HepG2 (cell line): ENCODE measurements at regions of chrX and their contacts with region 1.

Region 1: GRCh38 chrX:82412858-82413257 is 1095.2 kb upstream of the POU3F4 start:
- DNase-seq: no peak
- ATAC-seq: no peak
- H3K4me3 ChIP-seq: no peak overlapping the region
- H3K27ac ChIP-seq: no peak overlapping the region
- H3K4me1 ChIP-seq: no peaks in the 10 kb centered on the region
- H3K27me3 ChIP-seq: no peaks in the 10 kb centered on the region
- CTCF ChIP-seq: no peak
- EP300 ChIP-seq: no peak
- POLR2A ChIP-seq: no peak
- RAD21 ChIP-seq: no peak

Region 2: GRCh38 chrX:82384401-82384800 is 28.5 kb before region 1 on chrX:
- CTCF ChIA-PET with region 1: no interaction called
- POLR2A ChIA-PET with region 1: no interaction called
- in situ Hi-C with region 1: no loop called
- intact Hi-C with region 1: no loop called
- DNase-seq: no peak
- ATAC-seq: no peak
- H3K4me3 ChIP-seq: no peak overlapping the region
- H3K27ac ChIP-seq: no peak overlapping the region
- H3K4me1 ChIP-seq: no peaks in the 10 kb centered on the region
- H3K27me3 ChIP-seq: no peaks in the 10 kb centered on the region
- CTCF ChIP-seq: no peak
- EP300 ChIP-seq: no peak
- POLR2A ChIP-seq: no peak
- RAD21 ChIP-seq: no peak

Region 3: DNA sequence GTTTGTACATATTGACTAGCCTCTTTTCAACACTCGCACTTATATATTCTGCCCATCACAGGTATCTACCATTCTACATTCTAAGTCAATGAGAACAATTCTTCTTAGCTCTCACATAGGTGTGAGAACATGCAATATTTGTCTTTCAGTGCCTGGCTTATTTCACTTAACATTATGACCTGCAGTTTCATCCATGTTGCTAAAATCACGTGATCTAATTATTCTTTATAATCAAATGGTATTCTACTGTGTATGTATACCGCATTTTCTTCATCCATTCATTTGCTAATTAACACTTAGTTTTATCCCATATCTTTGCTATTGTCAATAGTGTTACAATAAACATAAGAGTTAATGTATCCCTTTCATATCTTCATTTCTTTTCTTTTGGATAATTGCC is 11.8 kb before region 1 on chrX:
- CTCF ChIA-PET with region 1: no interaction called
- POLR2A ChIA-PET with region 1: no interaction called
- in situ Hi-C with region 1: no loop called
- intact Hi-C with region 1: loop called (anchors 1 kb)
- DNase-seq: no peak
- ATAC-seq: no peak
- H3K4me3 ChIP-seq: no peak overlapping the region
- H3K27ac ChIP-seq: no peak overlapping the region
- H3K4me1 ChIP-seq: no peaks in the 10 kb centered on the region
- H3K27me3 ChIP-seq: no peaks in the 10 kb centered on the region
- CTCF ChIP-seq: no peak
- EP300 ChIP-seq: no peak
- POLR2A ChIP-seq: no peak
- RAD21 ChIP-seq: no peak